PC-9 (cell line): ENCODE measurements at regions of chr13 and their contacts with region 1.

Region 1: DNA sequence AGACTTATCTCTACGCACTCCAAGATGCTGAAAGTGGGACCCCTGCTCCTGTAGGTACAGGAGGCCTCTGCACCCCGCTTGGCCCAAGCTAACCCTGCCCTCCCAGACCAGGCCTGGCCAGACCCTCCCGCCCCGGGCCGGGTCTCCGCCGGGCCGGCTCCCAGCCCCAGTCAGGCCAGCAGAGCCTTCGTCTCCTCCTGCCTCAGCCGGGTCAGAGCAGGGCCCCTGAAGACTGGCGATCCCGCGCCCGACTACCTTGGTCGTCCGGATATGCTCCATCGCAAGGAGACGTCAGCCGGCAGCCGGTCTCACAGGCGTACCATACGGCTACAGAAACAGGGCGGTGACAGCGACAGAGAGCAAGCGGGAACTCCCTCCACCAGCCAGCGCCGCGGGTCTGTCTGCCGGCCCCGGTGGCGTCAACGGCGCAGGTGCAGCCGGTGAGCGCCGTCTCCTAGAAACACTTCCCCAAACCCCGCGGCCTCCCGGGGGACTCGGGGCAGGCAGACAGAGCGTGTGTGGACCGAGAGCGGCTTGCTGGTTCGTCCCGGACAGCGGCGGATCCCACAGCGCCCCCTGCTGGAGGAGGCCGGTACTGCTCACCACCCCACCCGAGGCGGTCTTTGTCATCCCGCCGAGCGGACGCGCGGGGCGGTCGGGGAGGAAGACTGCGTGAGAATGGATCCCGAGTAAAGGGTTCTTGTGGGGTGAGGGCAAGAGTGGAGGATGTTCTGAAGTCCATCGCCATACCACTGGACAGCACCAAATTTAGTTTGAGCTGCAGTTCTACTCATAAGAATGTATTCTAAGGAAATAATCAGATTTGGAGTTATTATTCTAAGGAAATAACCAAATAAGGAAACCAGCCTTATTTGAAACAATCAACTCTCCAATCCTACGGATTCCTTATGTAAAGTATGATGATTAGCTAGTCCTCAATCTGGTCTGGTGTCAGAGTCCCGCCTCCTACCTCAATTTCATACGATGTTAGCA is at the start of gene MTMR6:
- DNase-seq: peak; percentile 65 to 85
- H3K4me3 ChIP-seq: peak within 1 kb of the TSS; percentile 74
- H3K27ac ChIP-seq: no peak within 1 kb of the TSS
- H3K4me1 ChIP-seq: peaks cover 13% of the 10 kb centered on the region
- H3K27me3 ChIP-seq: no peaks in the 10 kb centered on the region
- CTCF ChIP-seq: peak; percentile 98
- total RNA-seq, gene MTMR6: 7.7 and 10.8 TPM in 2 replicates

Region 2: DNA sequence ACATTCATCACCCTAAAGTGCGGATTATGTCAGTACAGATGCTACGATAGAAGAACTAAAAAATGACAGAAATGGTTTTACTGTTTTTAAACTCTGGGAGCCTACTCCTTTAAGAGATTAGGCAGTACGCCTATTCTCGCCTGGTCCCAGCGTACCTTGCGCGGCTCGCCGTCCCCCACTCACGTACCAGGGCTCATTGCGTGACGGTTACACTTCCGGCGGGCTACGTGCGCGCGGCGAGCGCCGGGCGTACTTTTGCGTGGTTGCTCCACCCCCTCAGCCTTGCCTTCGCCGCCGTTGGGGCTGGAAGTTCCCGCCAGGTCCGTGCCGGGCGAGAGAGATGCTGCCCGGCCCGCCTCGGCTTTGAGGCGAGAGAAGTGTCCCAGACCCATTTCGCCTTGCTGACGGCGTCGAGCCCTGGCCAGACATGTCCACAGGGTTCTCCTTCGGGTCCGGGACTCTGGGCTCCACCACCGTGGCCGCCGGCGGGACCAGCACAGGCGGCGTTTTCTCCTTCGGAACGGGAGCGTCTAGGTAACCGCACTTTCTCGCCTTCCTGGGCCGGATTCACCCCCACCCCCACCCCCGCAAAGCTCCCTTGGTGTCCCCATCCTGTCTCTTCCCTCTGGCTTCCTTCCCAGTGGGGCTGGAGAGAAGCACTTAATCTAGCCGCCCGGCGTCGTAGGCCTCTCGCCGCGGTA is 14.2 kb after region 1 on chr13 and contains the start of gene NUP58:
- CTCF ChIA-PET with region 1: no interaction called
- POLR2A ChIA-PET with region 1: interaction called, 10 read pairs
- intact Hi-C with region 1: no loop called
- DNase-seq: peak; percentile 79 to 85
- H3K4me3 ChIP-seq: peak within 1 kb of the TSS; percentile 64
- H3K27ac ChIP-seq: peak within 1 kb of the TSS; percentile 65
- H3K4me1 ChIP-seq: peaks cover 41% of the 10 kb centered on the region
- H3K27me3 ChIP-seq: 0 out of 2 replicates have a peak, but pooled peaks cover 7% of the 10 kb centered on the region
- CTCF ChIP-seq: no peak
- total RNA-seq, gene NUP58: 50.6 and 55.1 TPM in 2 replicates

Region 3: GRCh38 chr13:25319771-25320170 is 32.5 kb after region 1 on chr13:
- CTCF ChIA-PET with region 1: no interaction called
- POLR2A ChIA-PET with region 1: interaction called, 12 read pairs
- intact Hi-C with region 1: no loop called
- DNase-seq: no peak
- H3K4me3 ChIP-seq: no peak overlapping the region
- H3K27ac ChIP-seq: peak overlapping the region; percentile 83; the same call in 1 of the 2 replicates
- H3K4me1 ChIP-seq: peaks cover 27% of the 10 kb centered on the region
- H3K27me3 ChIP-seq: no peaks in the 10 kb centered on the region
- CTCF ChIP-seq: no peak

Region 4: DNA sequence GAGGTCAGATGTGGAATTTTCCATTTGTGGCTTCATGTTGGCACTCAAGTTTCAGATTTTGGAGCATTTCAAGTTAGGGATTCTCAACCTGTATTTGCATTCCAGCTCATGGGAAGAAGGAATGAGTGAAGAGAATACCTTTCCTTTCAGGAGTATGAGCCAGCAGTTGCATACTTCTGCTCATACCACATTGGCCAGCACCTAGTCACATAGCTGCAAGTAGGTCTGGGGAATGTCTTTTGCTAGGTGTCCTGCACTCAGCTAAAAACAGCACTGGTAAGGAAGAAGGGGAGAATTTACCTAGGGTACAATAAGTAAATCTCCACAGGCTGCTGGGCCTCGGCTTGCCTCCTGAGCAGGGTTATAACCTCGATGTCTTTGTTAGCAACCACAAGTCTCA is 59.9 kb after region 1 on chr13:
- CTCF ChIA-PET with region 1: no interaction called
- POLR2A ChIA-PET with region 1: interaction called, 16 read pairs
- intact Hi-C with region 1: no loop called
- DNase-seq: no peak
- H3K4me3 ChIP-seq: no peak overlapping the region
- H3K27ac ChIP-seq: no peak overlapping the region
- H3K4me1 ChIP-seq: no peaks in the 10 kb centered on the region
- H3K27me3 ChIP-seq: peaks cover 7% of the 10 kb centered on the region
- CTCF ChIP-seq: no peak